Activated CD4-positive, alpha-beta T cell treated with anti-CD3 and anti-CD28 coated beads, Interleukin-2, amount 10 ng/mL, durations not matched to agents 7 days and 5 days (primary cell): ENCODE measurements at regions of chr16 and their contacts with region 1.

Region 1: GRCh38 chr16:89700100-89700648 is 1.3 kb downstream of the SPATA2L start:
- DNase-seq: peak; percentile 96
- H3K4me3 Mint-ChIP-seq: peak overlapping the region; percentile 74
- H3K27ac Mint-ChIP-seq: peak overlapping the region; percentile 78
- H3K4me1 Mint-ChIP-seq: peaks cover 31% of the 10 kb centered on the region
- H3K27me3 Mint-ChIP-seq: no peaks in the 10 kb centered on the region

Region 2: DNA sequence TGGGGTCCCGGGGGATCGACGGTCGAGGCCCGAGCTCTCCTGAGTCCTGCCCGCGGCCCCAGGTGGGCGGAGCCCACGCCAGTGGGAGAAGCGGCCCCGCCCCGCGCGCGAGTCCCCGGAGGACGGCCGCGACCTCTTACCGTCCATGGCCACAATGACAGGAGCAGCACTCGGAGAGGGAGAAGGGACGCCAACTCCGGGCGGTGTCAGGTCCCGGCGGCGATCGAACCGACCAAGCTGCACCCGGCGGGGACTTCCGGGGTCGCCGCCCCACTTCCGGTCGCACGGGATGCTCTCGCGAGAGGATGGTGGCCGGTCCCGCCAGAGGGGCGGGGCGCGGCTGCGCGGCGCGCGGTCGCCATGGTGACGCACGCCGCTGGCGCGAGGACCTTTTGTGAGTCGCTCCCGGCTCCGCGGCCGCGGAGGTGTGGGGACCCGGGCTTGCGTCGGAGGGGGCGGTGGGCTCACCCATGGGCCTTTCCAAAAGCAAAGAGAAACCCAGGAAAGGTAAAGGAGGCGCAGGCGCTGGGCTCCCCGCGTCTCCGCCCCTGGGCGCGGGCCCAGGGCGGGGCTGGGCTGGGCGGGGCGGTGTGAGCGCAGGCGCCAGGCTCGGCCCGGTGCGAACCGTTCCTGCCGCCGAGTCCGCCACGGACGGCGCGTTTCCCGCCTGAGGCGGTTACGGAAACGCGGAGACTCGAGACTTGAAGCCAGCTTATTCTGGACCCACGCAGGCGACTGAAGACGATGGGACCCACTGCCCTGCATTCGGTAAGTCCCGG is 42.5 kb before region 1 on chr16 and contains the starts of genes CHMP1A and SPATA33:
- CTCF ChIA-PET with region 1: interaction called, 13 read pairs
- POLR2A ChIA-PET with region 1: no interaction called
- DNase-seq: peak; percentile 91
- H3K4me3 Mint-ChIP-seq: peak within 1 kb of the TSS; percentile 79
- H3K27ac Mint-ChIP-seq: peak within 1 kb of the TSS; percentile 85
- H3K4me1 Mint-ChIP-seq: peaks cover 48% of the 10 kb centered on the region
- H3K27me3 Mint-ChIP-seq: no peaks in the 10 kb centered on the region
- total RNA-seq, gene CHMP1A: 77.6 to 102 TPM
- total RNA-seq, gene SPATA33: 14.5 to 14.8 TPM

Region 3: GRCh38 chr16:89711601-89712273 is 11.6 kb after region 1 on chr16:
- CTCF ChIA-PET with region 1: interaction called, 46 read pairs
- POLR2A ChIA-PET with region 1: no interaction called
- DNase-seq: peak; percentile 76
- H3K4me3 Mint-ChIP-seq: peak overlapping the region; percentile 64
- H3K27ac Mint-ChIP-seq: no peak overlapping the region
- H3K4me1 Mint-ChIP-seq: peaks cover 9% of the 10 kb centered on the region
- H3K27me3 Mint-ChIP-seq: no peaks in the 10 kb centered on the region

Region 4: GRCh38 chr16:89791278-89791995 is 91.3 kb after region 1 on chr16:
- CTCF ChIA-PET with region 1: interaction called, 29 read pairs
- POLR2A ChIA-PET with region 1: no interaction called
- DNase-seq: no peak
- H3K4me3 Mint-ChIP-seq: no peak overlapping the region
- H3K27ac Mint-ChIP-seq: no peak overlapping the region
- H3K4me1 Mint-ChIP-seq: peaks cover 14% of the 10 kb centered on the region
- H3K27me3 Mint-ChIP-seq: no peaks in the 10 kb centered on the region

Region 5: GRCh38 chr16:89873972-89874689 is 174.0 kb after region 1 on chr16:
- CTCF ChIA-PET with region 1: interaction called, 11 read pairs
- POLR2A ChIA-PET with region 1: no interaction called
- DNase-seq: peak; percentile 92
- H3K4me3 Mint-ChIP-seq: peak overlapping the region; percentile 90
- H3K27ac Mint-ChIP-seq: peak overlapping the region; percentile 98
- H3K4me1 Mint-ChIP-seq: peaks cover 17% of the 10 kb centered on the region
- H3K27me3 Mint-ChIP-seq: no peaks in the 10 kb centered on the region